Activated T-helper 1 cell treated with anti-CD3 and anti-CD28 coated beads, Interleukin-12 subunit alpha, Interleukin-12 subunit beta, Interleukin-2, Interleukin-4 antibody, amounts not matched to agents 30 ng/mL and 10 ng/mL and 1 ng/mL, durations not matched to agents 14 hours and 24 hours and 36 hours (primary cell): ENCODE measurements at regions of chr15 and their contacts with region 1.

Region 1: GRCh38 chr15:91469632-91470567 is 369.8 kb downstream of the SV2B start:
- DNase-seq: peak; percentile 63
- H3K4me3 Mint-ChIP-seq: peak overlapping the region; percentile 1
- H3K27ac Mint-ChIP-seq: peak overlapping the region; percentile 67
- H3K4me1 Mint-ChIP-seq: peaks cover 50% of the 10 kb centered on the region
- H3K27me3 Mint-ChIP-seq: no peaks in the 10 kb centered on the region

Region 2: DNA sequence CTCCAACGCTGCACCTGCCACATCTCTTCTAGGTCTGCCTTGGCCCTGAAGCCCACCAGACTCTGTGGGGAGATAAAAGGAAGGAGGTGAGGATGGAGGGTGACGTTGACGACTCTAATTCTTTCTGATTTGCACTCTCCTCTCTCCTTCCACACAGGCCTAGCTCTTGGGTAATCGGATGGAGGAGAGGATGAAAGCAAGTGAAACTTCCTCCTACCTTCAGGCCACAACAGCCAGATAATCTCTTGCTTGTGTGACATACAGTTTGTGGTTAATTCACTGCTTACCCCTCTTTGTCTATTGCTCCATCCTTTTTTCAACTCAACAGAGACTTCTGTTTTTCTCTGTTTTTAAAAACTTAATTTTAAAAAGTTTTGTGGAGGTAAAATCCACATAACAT is 161.7 kb before region 1 on chr15:
- intact Hi-C with region 1: loop called (anchors 1 kb)
- DNase-seq: no peak
- H3K4me3 Mint-ChIP-seq: no peak overlapping the region
- H3K27ac Mint-ChIP-seq: no peak overlapping the region
- H3K4me1 Mint-ChIP-seq: peaks cover 43% of the 10 kb centered on the region
- H3K27me3 Mint-ChIP-seq: peaks cover 42% of the 10 kb centered on the region

Region 3: DNA sequence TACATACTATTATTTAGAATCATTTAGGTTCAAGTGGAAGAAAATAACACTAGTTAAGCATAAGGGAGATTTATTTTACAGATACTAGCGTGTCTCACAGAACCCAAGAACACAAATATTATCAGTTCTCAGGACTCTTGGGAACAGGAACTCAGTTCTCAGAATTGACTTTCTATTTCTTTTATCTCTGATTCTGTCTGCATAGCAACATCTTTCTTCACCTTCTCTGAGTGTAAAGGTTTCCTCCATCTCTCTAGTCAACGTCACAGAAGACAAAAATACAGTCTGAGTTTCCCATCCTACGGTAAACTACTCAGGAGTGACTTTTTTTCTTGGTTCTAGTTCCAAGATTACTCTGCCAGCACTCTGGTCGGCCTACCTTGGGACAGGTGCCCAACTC is 149.8 kb before region 1 on chr15:
- intact Hi-C with region 1: loop called (anchors 5 kb)
- DNase-seq: no peak
- H3K4me3 Mint-ChIP-seq: peak overlapping the region; percentile 13
- H3K27ac Mint-ChIP-seq: no peak overlapping the region
- H3K4me1 Mint-ChIP-seq: peaks cover 15% of the 10 kb centered on the region
- H3K27me3 Mint-ChIP-seq: peaks cover 34% of the 10 kb centered on the region

Region 4: GRCh38 chr15:91426412-91426811 is 43.5 kb before region 1 on chr15:
- intact Hi-C with region 1: loop called (anchors 1 kb)
- DNase-seq: no peak
- H3K4me3 Mint-ChIP-seq: no peak overlapping the region
- H3K27ac Mint-ChIP-seq: no peak overlapping the region
- H3K4me1 Mint-ChIP-seq: peaks cover 37% of the 10 kb centered on the region
- H3K27me3 Mint-ChIP-seq: no peaks in the 10 kb centered on the region

Region 5: DNA sequence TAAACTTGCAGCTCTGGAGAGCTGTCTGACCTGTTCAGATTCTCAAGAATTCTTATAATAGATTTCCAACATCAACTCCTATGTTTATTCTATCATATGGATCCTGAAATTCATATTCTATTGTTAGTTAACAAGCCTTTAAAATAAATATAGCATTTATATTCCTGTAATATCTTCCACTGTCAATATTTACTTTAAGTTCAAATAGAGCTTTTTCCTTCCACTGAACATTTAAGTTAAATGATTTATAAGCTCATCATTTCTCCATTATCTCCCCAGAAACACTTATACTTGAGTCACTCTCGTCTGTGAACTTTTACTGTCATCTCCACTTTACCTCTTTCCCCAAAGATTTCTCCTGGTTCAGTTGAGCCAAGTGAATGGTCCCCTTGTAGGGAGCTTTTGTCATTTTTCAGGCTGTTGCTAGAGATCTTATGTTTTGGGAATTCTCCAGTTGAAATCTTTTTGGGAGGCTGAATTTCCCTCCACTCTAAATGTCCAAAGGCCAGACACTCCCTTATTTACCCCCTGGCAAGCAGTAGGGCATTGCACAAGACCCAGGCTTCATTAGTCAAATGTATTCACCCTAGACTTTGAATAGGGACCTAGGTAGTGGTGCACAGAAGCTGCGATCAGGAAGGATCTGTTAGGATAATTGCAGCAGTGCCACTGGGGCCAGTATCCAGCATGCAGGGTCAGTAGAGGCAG is 26.9 kb after region 1 on chr15:
- intact Hi-C with region 1: no loop called
- DNase-seq: no peak
- H3K4me3 Mint-ChIP-seq: no peak overlapping the region
- H3K27ac Mint-ChIP-seq: no peak overlapping the region
- H3K4me1 Mint-ChIP-seq: no peaks in the 10 kb centered on the region
- H3K27me3 Mint-ChIP-seq: peaks cover 6% of the 10 kb centered on the region

Region 6: GRCh38 chr15:91522663-91523332 is 52.9 kb after region 1 on chr15:
- intact Hi-C with region 1: loop called (anchors 5 kb)
- DNase-seq: no peak
- H3K4me3 Mint-ChIP-seq: no peak overlapping the region
- H3K27ac Mint-ChIP-seq: no peak overlapping the region
- H3K4me1 Mint-ChIP-seq: peaks cover 21% of the 10 kb centered on the region
- H3K27me3 Mint-ChIP-seq: peaks cover 12% of the 10 kb centered on the region

Region 7: DNA sequence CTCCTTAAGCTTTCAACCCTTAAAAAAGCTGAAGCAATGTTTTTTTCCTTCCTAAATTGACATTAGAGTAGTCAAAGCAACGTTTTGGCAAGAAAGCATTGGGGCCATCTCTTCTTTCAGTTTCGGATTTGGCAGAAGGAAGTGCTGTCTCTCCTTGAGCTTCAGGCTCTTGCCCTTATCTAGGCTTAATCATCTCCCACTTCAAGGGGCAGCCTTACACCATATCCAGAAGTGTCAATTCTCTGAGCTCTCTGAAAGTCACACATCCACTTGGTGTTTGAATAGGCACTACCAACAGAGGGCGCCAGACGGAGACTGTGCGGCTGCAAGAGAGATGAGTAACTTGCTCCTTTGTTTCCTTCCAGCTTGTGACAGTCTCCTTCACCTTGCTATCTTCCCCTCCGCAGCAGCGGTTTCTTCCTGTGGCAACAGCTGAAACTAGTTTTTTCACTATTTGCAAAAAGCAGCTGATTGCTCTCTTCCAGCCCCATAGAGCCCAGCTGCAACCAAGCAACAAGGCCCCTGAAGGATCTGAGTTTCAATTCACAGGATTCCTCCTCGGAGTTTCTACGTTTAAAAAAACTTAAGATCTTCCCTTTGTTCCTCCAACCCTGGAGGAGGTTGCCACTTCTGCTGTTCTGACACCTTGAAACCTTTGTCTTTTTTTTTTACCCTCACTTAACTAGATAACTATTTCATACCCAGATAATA is 236.6 kb after region 1 on chr15:
- intact Hi-C with region 1: loop called (anchors 1 kb)
- DNase-seq: peak; percentile 84
- H3K4me3 Mint-ChIP-seq: peak overlapping the region; percentile 9
- H3K27ac Mint-ChIP-seq: peak overlapping the region; percentile 76
- H3K4me1 Mint-ChIP-seq: peaks cover 24% of the 10 kb centered on the region
- H3K27me3 Mint-ChIP-seq: peaks cover 22% of the 10 kb centered on the region

Region 8: GRCh38 chr15:92808978-92809879 is 1339.3 kb after region 1 on chr15:
- intact Hi-C with region 1: loop called (anchors 10 kb)
- DNase-seq: peak; percentile 100
- H3K4me3 Mint-ChIP-seq: peak overlapping the region; percentile 94
- H3K27ac Mint-ChIP-seq: peak overlapping the region; percentile 98
- H3K4me1 Mint-ChIP-seq: peaks cover 60% of the 10 kb centered on the region
- H3K27me3 Mint-ChIP-seq: no peaks in the 10 kb centered on the region